Left colon (tissue), 2 donors: ENCODE measurements at regions of chr13 and their contacts with region 1.

Region 1: DNA sequence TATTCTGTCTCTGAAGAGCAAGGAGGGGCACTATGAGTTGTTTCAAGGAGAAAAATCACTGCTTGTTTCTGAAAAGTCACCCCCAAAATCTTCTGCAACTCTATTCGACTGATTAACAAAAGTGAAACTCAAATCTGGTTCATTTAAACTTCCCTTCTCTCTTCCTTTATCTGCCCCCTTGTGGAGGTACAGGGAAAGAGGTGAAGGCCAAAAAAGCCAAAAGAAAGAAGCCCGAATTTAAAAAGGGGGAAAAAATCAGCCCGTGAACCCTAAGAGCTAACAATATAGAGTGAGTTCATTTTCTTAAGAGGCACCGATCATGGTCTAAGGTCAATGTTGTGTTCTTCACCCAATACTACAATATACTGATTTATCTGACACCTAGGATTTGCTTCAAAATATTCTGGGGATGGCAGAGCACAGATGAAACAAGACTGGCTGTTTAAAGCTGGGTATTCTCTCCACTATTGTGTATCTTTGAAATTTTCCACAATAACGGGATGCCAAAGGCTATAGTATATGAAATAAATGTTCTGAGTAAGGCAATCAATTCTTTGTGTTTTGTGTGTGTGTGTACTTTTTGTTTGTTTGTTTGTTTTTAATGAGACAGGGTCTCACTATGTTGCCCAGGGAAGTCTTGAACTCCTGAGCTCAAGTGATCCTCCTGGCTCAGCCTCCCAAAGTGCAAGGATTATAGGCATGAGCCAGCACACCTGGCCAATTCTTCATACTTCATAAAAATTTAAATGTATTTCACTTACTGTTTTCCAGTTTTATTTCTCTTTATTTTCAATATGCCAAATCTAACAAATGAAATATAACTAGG is 55.0 kb upstream of the EEF1AKMT1 start:
- DNase-seq: no peak
- ATAC-seq: peak; percentile 71

Region 2: DNA sequence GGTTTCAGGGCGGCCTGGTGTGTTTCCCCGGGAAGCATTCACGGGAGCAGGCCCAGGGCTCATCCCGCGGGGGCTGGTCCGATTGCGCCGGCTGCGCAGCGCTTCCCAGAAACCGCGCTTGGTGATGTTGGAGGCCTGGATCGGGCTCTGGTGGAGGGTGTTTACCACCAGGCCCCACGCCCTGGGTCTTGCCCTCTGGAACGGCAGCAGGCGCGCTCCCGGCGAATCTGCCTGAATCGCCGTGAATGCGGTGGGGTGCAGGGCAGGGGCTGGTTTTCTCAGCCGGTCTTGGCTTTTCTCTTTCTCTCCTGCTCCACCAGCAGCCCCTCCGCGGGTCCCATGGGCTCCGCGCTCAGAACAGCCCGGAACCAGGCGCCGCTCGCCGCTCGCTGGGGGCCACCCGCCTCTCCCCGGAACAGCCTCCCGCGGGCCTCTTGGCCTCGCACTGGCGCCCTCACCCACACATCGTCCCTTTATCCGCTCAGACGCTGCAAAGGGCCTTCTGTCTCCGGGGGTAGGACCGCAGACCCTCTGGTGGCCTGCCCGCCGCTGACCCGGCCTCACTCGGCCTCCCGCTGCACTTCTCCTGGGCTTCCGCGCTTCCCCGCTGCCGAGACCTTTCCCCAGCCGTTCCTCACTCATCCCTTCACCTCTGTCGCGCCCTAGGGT is 527.2 kb before region 1 on chr13:
- intact Hi-C with region 1: no loop called
- DNase-seq: no peak
- ATAC-seq: no peak

Region 3: GRCh38 chr13:20495082-20496023 is 333.4 kb before region 1 on chr13:
- intact Hi-C with region 1: loop called in 1 of 2 experiments (anchors 5 kb)
- DNase-seq: peak; percentile 49 to 69
- ATAC-seq: peak; percentile 78

Region 4: GRCh38 chr13:20713751-20714150 is 115.0 kb before region 1 on chr13:
- intact Hi-C with region 1: loop called in 1 of 2 experiments (anchors 5 kb)
- DNase-seq: no peak
- ATAC-seq: no peak

Region 5: GRCh38 chr13:20990910-20991525 is 162.3 kb after region 1 on chr13:
- intact Hi-C with region 1: no loop called
- DNase-seq: no peak
- ATAC-seq: no peak